Mammary epithelial cell (primary cell): ENCODE measurements at regions of chr2 and their contacts with region 1.

Region 1: DNA sequence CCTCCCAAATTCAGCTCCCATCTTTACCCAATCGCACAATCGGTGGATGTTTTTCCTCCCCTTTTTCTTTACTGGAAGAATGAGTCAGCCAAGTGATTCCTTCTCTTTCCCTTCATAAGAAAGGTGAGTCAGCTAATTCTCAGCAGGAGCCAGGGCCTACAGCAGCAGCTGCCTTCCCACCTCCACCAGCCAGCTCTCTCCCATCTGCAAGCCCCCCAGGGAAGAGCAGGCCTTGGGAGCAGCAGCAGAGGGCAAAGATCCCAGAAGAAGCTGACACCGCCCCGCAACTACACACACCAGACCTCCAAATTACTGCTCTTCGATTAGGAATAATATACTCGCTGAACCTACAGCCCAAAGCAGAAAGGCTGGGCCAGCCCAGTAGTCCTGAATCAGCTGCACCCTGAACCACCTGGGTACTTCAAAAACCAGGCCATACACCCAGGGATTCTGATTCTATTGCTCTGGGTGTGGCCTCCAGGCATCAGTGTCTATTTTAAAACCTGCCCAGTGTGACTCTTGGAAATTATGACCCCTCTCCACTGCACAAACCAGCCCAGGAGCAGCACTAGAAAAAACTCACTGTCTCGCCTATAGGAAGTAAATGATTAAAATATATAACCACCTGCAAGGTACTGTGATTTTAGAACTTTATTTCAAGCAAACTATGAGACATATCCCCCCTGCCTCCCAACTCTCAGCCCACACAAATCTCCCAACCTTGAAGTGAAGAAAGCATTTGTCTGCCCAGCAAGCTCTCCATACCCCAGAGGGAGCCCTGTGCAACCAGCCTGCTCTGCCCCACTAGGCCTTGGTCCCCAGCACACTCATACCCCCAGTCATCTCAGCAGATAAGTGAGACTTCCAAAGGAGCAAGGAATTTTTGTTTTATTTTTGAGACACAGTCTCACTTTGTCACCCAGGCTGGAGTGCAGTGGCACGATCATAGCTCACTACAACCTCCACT is 7.3 kb downstream of the SFXN5 start:
- DNase-seq: peak; percentile 73
- H3K4me3 ChIP-seq: no peak overlapping the region
- H3K27ac ChIP-seq: peak overlapping the region; percentile 52
- H3K4me1 ChIP-seq: peaks cover 35% of the 10 kb centered on the region
- H3K27me3 ChIP-seq: no peaks in the 10 kb centered on the region
- CTCF ChIP-seq: no peak

Region 2: DNA sequence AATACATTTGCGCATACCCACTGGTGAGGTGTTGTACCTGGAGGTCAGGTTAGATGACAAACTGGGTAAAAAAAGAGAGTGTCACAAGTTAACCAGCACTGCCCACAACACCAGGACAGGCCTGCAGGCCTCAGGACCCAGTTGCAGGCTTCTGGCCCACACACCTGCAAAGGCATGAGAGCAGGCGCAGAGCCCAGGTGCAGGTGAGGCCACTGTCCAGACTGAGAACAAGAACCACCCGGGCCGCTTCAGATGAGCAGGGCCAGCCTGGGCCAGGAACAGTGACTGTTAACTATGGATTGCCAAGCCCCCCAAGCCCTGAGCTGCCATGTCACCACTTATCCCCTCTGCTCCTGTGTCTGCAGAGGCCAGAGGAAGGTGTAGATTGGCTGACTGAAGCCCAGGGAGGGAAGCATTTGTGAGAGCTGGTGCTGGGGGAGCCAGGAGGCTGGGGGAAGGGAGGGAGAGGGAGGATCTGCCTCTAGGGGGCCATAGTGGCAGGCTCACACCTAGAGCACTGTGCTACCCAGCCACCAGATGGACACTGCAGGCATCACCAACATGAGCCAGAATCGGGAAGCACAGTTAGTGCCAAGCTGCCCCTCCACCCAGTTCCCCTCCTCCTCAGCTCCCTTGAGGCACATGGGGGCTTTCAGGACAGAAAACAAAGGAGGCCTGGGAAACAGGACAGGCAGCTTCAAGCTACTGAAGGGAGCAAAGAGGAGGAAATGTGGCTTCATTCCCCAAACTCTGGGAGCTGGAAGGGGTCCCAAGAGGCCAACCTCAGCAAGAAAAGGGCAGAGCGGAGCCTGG is 28.1 kb before region 1 on chr2:
- CTCF ChIA-PET with region 1: interaction called, 11 read pairs
- dilution Hi-C with region 1: no loop called
- in situ Hi-C with region 1: no loop called
- intact Hi-C with region 1: no loop called
- DNase-seq: no peak
- H3K4me3 ChIP-seq: no peak overlapping the region
- H3K27ac ChIP-seq: no peak overlapping the region
- H3K4me1 ChIP-seq: no peaks in the 10 kb centered on the region
- H3K27me3 ChIP-seq: no peaks in the 10 kb centered on the region
- CTCF ChIP-seq: no peak

Region 3: DNA sequence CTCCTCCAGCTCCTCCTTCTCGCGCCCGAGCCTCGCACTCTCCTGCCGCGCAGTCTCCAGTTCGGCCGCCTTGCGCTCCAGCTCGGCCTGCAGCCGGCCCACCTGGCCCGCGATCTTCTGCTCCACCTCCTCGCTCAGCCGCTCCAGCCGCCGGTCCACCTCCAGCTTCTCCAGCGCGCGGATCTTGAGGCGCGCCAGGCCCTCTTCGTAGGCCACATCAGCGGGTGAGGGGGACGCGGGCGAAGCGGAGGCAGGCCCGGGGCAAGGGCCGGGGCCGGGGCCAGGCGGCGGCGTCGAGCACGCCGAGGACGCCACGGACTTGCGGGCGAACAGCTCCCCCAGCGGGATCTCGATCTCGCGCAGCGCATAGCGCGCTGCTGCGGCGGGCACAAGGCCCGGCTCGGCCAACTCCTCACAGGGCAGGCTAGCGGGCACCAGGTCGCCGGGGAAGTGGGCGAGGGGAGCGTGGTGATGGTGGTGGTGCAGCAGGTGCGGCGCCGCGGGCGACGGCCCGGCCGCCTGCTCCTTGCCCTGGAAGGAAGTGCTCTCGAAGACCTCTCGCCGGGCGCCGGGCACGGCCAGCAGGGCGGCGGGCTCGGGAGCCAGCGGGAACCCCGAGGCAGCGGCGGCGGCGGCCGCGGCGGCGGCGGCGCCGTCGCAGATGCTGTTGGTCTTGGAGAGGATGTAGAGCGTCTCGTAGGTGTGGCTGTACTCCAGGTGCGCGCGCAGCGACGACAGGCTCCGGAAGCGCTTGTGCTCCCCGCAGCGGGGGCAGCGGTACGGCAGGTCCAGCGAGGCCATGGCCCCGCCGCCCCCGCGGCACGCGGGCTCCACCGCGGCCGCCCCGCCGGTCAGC is 204.9 kb after region 1 on chr2:
- CTCF ChIA-PET with region 1: no interaction called
- dilution Hi-C with region 1: no loop called
- in situ Hi-C with region 1: no loop called
- intact Hi-C with region 1: no loop called
- DNase-seq: peak; percentile 70
- H3K4me3 ChIP-seq: peak overlapping the region; percentile 14 to 50 (median 50)
- H3K27ac ChIP-seq: no peak overlapping the region
- H3K4me1 ChIP-seq: peaks cover 13% of the 10 kb centered on the region
- H3K27me3 ChIP-seq: no peaks in the 10 kb centered on the region
- CTCF ChIP-seq: peak in 1 of 2 donors; percentile 34